Activated CD8-positive, alpha-beta T cell treated with anti-CD3 and anti-CD28 coated beads for 36 hours (primary cell): ENCODE measurements at regions of chr10 and their contacts with region 1.

Region 1: GRCh38 chr10:95374597-95375209 is 83.9 kb upstream of the PDLIM1 start:
- DNase-seq: peak; percentile 75
- ATAC-seq: peak; percentile 97
- H3K4me3 Mint-ChIP-seq: no peak overlapping the region
- H3K27ac Mint-ChIP-seq: no peak overlapping the region
- H3K4me1 Mint-ChIP-seq: no peaks in the 10 kb centered on the region
- H3K27me3 Mint-ChIP-seq: peaks cover 10% of the 10 kb centered on the region
- CTCF ChIP-seq: peak; percentile 78

Region 2: GRCh38 chr10:95295031-95295755 is 79.5 kb before region 1 on chr10:
- CTCF ChIA-PET with region 1: interaction called, 10 read pairs
- POLR2A ChIA-PET with region 1: no interaction called
- intact Hi-C with region 1: no loop called
- DNase-seq: peak; percentile 73
- ATAC-seq: peak; percentile 79
- H3K4me3 Mint-ChIP-seq: peak overlapping the region; percentile 55
- H3K27ac Mint-ChIP-seq: peak overlapping the region; percentile 24
- H3K4me1 Mint-ChIP-seq: peaks cover 9% of the 10 kb centered on the region
- H3K27me3 Mint-ChIP-seq: peaks cover 32% of the 10 kb centered on the region
- CTCF ChIP-seq: no peak

Region 3: DNA sequence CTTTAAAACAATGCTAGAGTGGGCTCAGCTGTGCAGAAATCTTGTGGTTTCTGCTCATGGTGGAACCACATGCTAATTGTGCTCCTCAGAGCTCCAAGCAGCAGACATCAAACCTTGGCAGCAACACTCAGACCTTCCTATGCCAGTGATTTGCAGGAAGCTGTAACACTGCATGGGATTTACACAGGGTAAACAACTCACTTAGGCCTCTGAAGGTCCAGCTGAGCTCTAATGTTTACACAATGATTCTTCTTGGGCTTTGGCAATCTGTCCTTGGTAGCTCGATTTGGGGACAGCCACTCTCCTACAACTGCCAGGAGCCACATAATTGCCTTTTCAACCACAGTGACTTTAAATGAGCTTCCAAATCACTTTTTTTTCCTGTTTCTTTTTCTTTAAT is 13.8 kb after region 1 on chr10:
- CTCF ChIA-PET with region 1: interaction called, 46 read pairs
- POLR2A ChIA-PET with region 1: no interaction called
- intact Hi-C with region 1: no loop called
- DNase-seq: no peak
- ATAC-seq: no peak
- H3K4me3 Mint-ChIP-seq: no peak overlapping the region
- H3K27ac Mint-ChIP-seq: no peak overlapping the region
- H3K4me1 Mint-ChIP-seq: peaks cover 5% of the 10 kb centered on the region
- H3K27me3 Mint-ChIP-seq: peaks cover 4% of the 10 kb centered on the region
- CTCF ChIP-seq: no peak

Region 4: GRCh38 chr10:95430231-95430951 is 55.7 kb after region 1 on chr10:
- CTCF ChIA-PET with region 1: interaction called, 20 read pairs
- POLR2A ChIA-PET with region 1: no interaction called
- intact Hi-C with region 1: no loop called
- DNase-seq: peak; percentile 44
- ATAC-seq: peak; percentile 99
- H3K4me3 Mint-ChIP-seq: no peak overlapping the region
- H3K27ac Mint-ChIP-seq: no peak overlapping the region
- H3K4me1 Mint-ChIP-seq: no peaks in the 10 kb centered on the region
- H3K27me3 Mint-ChIP-seq: no peaks in the 10 kb centered on the region
- CTCF ChIP-seq: peak; percentile 93

Region 5: DNA sequence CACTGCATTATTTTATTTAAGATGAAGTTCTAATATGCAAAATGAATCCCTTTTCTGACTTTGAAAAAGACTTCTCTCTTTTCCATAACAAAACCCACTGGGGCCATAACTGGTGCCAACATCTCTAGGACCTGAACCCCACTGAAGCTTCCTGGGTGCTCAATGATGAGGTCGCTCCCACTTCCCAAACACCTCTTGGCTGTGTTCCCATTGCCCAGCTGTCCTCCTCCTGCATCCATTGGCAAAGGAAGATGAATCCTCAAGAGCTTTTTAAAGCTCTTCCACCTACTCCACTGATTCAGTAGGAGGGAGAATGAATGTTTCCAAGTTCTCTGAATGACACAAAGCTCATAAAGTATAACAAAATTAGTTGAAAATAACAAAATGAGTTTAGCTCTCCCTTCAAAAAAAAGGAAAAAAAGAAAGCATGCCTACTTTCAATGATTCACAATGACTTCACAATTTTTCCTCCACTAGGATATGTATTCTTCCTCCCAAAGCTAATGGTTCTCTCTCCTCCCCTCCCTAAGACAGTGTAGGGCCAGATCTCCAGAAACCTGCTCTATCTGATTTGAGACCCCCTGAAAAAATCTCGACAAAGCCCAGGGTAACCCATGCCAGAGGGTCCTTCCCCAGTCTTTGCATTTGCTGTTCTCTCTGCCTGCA is 121.7 kb after region 1 on chr10:
- CTCF ChIA-PET with region 1: no interaction called
- POLR2A ChIA-PET with region 1: no interaction called
- intact Hi-C with region 1: no loop called
- DNase-seq: no peak
- ATAC-seq: no peak
- H3K4me3 Mint-ChIP-seq: no peak overlapping the region
- H3K27ac Mint-ChIP-seq: no peak overlapping the region
- H3K4me1 Mint-ChIP-seq: no peaks in the 10 kb centered on the region
- H3K27me3 Mint-ChIP-seq: no peaks in the 10 kb centered on the region
- CTCF ChIP-seq: no peak

Region 6: GRCh38 chr10:95601116-95601719 is 226.5 kb after region 1 on chr10:
- CTCF ChIA-PET with region 1: interaction called, 33 read pairs
- POLR2A ChIA-PET with region 1: no interaction called
- intact Hi-C with region 1: loop called (anchors 2 kb)
- DNase-seq: peak; percentile 70
- ATAC-seq: no peak
- H3K4me3 Mint-ChIP-seq: no peak overlapping the region
- H3K27ac Mint-ChIP-seq: no peak overlapping the region
- H3K4me1 Mint-ChIP-seq: no peaks in the 10 kb centered on the region
- H3K27me3 Mint-ChIP-seq: peaks cover 1% of the 10 kb centered on the region
- CTCF ChIP-seq: peak; percentile 89